ENCODE measurements at regions of chr3 and their contacts with region 1.

Region 1: GRCh38 chr3:124905849-124906248 is 18.7 kb upstream of the ITGB5 start:
- DNase-seq: peak; percentile 20
- H3K4me3 ChIP-seq: no peak overlapping the region
- H3K27ac ChIP-seq: no peak overlapping the region
- H3K4me1 ChIP-seq: 0 out of 2 replicates have a peak, but pooled peaks cover 3% of the 10 kb centered on the region
- H3K27me3 ChIP-seq: no peaks in the 10 kb centered on the region; the same call in 1 of the 2 replicates

Region 2: DNA sequence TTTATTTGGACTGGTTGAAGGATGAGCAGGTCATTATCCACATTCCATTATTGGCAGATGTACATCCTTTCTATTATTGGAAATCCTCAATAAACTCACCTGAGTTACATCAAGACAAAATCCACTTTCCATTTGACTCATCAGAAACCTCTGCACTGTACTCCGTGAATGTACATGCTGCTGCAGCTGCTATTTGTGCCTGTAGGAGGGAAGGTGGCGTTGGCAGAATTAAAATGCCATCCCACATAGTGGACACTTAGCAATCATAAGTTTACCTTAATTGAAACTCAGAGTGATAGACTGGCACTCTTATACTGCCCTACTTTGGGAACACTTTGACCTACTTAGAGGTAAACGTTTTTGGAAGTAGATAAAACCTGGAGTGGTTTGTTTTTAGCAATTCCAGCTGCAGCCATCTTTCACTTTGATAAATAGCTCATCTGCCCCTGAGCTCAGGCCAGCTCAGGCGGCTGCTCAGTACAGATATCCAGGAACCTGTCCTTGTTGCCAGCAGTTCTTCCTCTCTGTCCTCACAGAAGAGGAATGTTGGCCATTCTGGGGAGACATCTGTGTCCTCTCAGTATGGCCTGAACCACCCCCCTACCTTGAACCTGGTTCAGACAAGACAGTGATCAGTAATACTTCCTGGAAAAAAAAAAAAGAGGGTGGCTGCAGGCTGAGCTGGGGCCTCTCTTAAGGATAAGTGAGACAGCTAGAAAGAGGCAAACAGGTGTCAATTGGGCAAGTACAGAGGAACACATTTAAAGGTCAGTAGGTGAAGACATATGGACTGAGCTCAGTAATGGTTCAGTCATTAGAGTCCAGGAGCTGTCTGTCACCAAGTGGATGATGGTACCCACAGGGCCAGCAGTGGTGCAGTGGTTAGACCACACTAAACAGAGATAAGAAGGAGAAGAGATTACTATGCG is 329.0 kb before region 1 on chr3:
- in situ Hi-C with region 1: loop called (anchors 10 kb)
- DNase-seq: no peak
- H3K4me3 ChIP-seq: no peak overlapping the region
- H3K27ac ChIP-seq: no peak overlapping the region
- H3K4me1 ChIP-seq: no peaks in the 10 kb centered on the region
- H3K27me3 ChIP-seq: no peaks in the 10 kb centered on the region

Region 3: GRCh38 chr3:124761250-124761796 is 144.5 kb before region 1 on chr3:
- in situ Hi-C with region 1: loop called (anchors 5 kb)
- DNase-seq: peak; percentile 90
- H3K4me3 ChIP-seq: no peak overlapping the region
- H3K27ac ChIP-seq: peak overlapping the region; percentile 48
- H3K4me1 ChIP-seq: peaks cover 14% of the 10 kb centered on the region
- H3K27me3 ChIP-seq: no peaks in the 10 kb centered on the region

Region 4: DNA sequence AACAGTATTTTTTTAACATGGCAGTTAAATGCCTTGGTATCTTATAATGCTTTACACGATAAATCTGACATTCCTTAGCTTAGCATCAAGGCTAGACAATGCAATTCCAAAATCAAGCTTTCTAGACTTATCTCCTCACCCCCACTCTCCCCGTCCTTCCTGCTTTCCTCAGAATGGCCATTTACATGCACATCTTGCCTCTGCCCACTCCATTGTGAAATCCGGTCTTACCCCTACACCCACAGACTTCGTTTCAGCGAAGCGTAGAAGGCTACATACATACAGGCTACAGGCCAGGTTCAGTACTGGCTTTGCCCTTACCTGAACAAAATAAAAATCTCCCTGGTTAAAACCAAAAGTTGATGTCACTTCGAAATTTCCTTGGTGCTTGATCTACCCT is 365.3 kb after region 1 on chr3:
- in situ Hi-C with region 1: no loop called
- DNase-seq: no peak
- H3K4me3 ChIP-seq: no peak overlapping the region
- H3K27ac ChIP-seq: no peak overlapping the region
- H3K4me1 ChIP-seq: no peaks in the 10 kb centered on the region
- H3K27me3 ChIP-seq: no peaks in the 10 kb centered on the region

Measured in GM23248 (cell line).